Ovary (tissue), 10 donors: ENCODE measurements at regions of chr4 and their contacts with region 1.

Region 1: DNA sequence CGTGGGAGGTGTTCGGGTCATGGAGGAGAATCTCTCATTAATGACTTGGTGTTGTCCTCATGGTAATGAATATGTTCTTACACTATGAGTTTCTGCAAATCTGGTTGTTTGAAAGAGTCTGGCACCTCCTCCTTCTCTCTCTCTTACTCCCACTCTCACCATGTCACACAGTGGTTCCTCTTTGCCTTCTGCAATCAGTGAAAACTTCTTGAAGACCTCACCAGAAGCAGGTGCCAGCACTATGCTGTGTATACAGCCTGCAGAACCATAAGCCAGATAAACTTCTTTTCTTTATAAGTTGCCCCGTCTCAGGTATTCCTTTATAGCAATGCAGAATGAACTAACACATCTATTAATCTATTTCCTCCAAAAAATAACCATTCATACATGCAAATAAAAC is 275.0 kb downstream of the ANTXR2 start:
- DNase-seq: no peak
- H3K4me3 ChIP-seq: no peak overlapping the region
- H3K27ac ChIP-seq: no peak overlapping the region
- H3K4me1 ChIP-seq: no peaks in the 10 kb centered on the region
- H3K27me3 ChIP-seq: no peaks in the 10 kb centered on the region
- CTCF ChIP-seq: no peak
- EP300 ChIP-seq: no peak
- POLR2A ChIP-seq: no peak

Region 2: GRCh38 chr4:78990938-78991810 is 806.9 kb before region 1 on chr4:
- intact Hi-C with region 1: no loop called
- DNase-seq: no peak
- H3K4me3 ChIP-seq: no peak overlapping the region
- H3K27ac ChIP-seq: no peak overlapping the region
- H3K4me1 ChIP-seq: no peaks in the 10 kb centered on the region
- H3K27me3 ChIP-seq: no peaks in the 10 kb centered on the region
- CTCF ChIP-seq: no peak
- EP300 ChIP-seq: no peak
- POLR2A ChIP-seq: no peak

Region 3: DNA sequence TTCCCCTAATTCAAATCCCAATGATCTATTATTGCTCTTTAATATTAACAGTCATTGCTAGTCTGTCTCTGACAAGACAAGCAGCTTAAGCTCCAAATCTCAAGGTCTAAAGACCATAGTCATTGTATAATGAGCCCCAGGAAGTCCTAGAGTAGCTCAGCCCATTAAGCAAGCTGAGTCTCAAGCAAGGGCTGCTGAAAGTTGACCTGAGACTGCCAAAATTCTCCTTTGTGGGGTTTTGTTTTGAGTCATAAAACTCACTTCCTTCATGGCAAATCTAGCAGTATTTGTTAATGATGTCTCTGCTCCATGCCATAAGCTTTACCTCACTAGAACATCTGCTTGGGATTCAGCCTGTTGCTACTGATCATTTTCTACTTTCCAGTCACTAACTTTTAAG is 38.3 kb before region 1 on chr4:
- intact Hi-C with region 1: no loop called
- DNase-seq: no peak
- H3K4me3 ChIP-seq: no peak overlapping the region
- H3K27ac ChIP-seq: no peak overlapping the region
- H3K4me1 ChIP-seq: no peaks in the 10 kb centered on the region
- H3K27me3 ChIP-seq: no peaks in the 10 kb centered on the region
- CTCF ChIP-seq: no peak
- EP300 ChIP-seq: no peak
- POLR2A ChIP-seq: no peak

Region 4: GRCh38 chr4:81225252-81225651 is 1427.2 kb after region 1 on chr4:
- intact Hi-C with region 1: loop called in 1 of 4 experiments (anchors 5 kb)
- DNase-seq: no peak
- H3K4me3 ChIP-seq: no peak overlapping the region
- H3K27ac ChIP-seq: no peak overlapping the region
- H3K4me1 ChIP-seq: no peaks in the 10 kb centered on the region
- H3K27me3 ChIP-seq: no peaks in the 10 kb centered on the region
- CTCF ChIP-seq: no peak
- EP300 ChIP-seq: no peak
- POLR2A ChIP-seq: no peak